CD4-positive, alpha-beta T cell (primary cell): ENCODE measurements at regions of chr19 and their contacts with region 1.

Region 1: GRCh38 chr19:36687214-36688056 is at the start of gene ZNF567:
- DNase-seq: peak; percentile 94 to 99 (median 97)
- ATAC-seq: peak; percentile 93
- H3K4me3 ChIP-seq: peak within 1 kb of the TSS; percentile 67
- H3K4me3 Mint-ChIP-seq: peak within 1 kb of the TSS; percentile 99
- H3K27ac ChIP-seq: peak within 1 kb of the TSS; percentile 47 to 56
- H3K27ac Mint-ChIP-seq: peak within 1 kb of the TSS; percentile 97
- H3K4me1 ChIP-seq: peaks cover 23% of the 10 kb centered on the region
- H3K4me1 Mint-ChIP-seq: peaks cover 40% of the 10 kb centered on the region
- H3K27me3 ChIP-seq: no peaks in the 10 kb centered on the region
- H3K27me3 Mint-ChIP-seq: no peaks in the 10 kb centered on the region
- CTCF ChIP-seq: no peak
- total RNA-seq, gene ZNF567: 7.3 to 7.6 TPM

Region 2: GRCh38 chr19:36489118-36489919 is 198.1 kb before region 1 on chr19 and contains the start of gene ZNF566:
- CTCF ChIA-PET with region 1: no interaction called
- POLR2A ChIA-PET with region 1: no interaction called
- intact Hi-C with region 1: loop called (anchors 1 to 5 kb)
- DNase-seq: peak; percentile 84 to 97 (median 89)
- ATAC-seq: peak; percentile 90
- H3K4me3 ChIP-seq: peak within 1 kb of the TSS; percentile 64
- H3K4me3 Mint-ChIP-seq: peak within 1 kb of the TSS; percentile 97
- H3K27ac ChIP-seq: peak within 1 kb of the TSS; percentile 84 to 87
- H3K27ac Mint-ChIP-seq: peak within 1 kb of the TSS; percentile 99
- H3K4me1 ChIP-seq: peaks cover 19% of the 10 kb centered on the region
- H3K4me1 Mint-ChIP-seq: peaks cover 36% of the 10 kb centered on the region
- H3K27me3 ChIP-seq: no peaks in the 10 kb centered on the region
- H3K27me3 Mint-ChIP-seq: no peaks in the 10 kb centered on the region
- CTCF ChIP-seq: no peak
- total RNA-seq, gene ZNF566: 6.3 to 6.8 TPM

Region 3: GRCh38 chr19:36605101-36605876 is 82.1 kb before region 1 on chr19 and contains the start of gene ZNF382:
- CTCF ChIA-PET with region 1: no interaction called
- POLR2A ChIA-PET with region 1: interaction called, 20 read pairs
- intact Hi-C with region 1: loop called in 1 of 2 experiments (anchors 1 kb)
- DNase-seq: peak; percentile 74 to 92 (median 85)
- ATAC-seq: peak; percentile 75
- H3K4me3 ChIP-seq: peak within 1 kb of the TSS; percentile 87
- H3K4me3 Mint-ChIP-seq: peak within 1 kb of the TSS; percentile 85
- H3K27ac ChIP-seq: peak within 1 kb of the TSS; percentile 92 to 95
- H3K27ac Mint-ChIP-seq: peak within 1 kb of the TSS; percentile 83
- H3K4me1 ChIP-seq: peaks cover 10% of the 10 kb centered on the region
- H3K4me1 Mint-ChIP-seq: peaks cover 28% of the 10 kb centered on the region
- H3K27me3 ChIP-seq: no peaks in the 10 kb centered on the region
- H3K27me3 Mint-ChIP-seq: no peaks in the 10 kb centered on the region
- CTCF ChIP-seq: no peak
- total RNA-seq, gene ZNF382: 4.2 to 4.4 TPM

Region 4: DNA sequence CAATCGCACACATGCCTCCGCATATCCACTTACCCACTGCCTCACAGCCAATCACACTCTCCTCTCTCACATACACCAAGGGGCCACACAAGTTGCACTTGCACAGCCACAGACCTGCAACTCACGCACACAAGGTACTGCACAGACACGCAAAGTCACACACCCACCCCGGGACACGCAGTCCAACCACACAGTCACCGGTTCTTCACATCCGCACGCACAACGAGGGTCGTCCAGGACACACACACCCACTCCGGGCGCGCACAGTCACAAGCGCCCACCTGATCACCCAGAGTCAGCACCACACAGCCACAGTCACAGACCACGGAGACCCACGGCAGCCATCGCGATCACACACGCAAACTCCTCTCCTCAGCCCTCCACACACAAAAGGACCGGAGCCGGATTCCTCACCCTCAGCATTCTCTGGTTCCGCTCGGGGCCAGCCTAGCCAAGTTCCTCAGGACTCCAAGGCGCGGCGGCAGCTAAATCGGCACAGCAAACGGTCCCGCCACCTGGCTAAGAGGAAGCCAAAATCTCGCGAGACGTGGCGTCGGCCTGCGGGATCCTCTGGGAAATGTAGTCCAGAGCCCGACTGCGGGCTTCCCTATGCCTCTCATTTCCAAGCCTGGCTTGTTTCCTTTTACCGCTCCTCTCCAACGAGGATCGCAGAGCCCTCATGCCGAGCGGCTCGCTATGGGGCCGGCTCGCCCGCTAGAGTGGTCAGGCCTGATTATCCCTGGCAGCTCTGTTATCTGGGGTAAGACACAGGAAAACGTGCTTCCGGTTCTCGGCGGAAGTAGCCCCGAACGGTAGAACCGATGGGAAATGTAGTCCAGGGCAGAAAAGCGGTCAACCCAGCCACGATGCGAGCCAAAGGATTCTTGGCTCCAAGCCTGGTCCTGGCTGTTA is 85.1 kb after region 1 on chr19 and contains the start of gene ZNF850:
- CTCF ChIA-PET with region 1: no interaction called
- POLR2A ChIA-PET with region 1: no interaction called
- intact Hi-C with region 1: loop called in 1 of 2 experiments (anchors 2 kb)
- DNase-seq: peak; percentile 87 to 96 (median 93)
- ATAC-seq: peak; percentile 94
- H3K4me3 ChIP-seq: peak within 1 kb of the TSS; percentile 91
- H3K4me3 Mint-ChIP-seq: peak within 1 kb of the TSS; percentile 95
- H3K27ac ChIP-seq: peak within 1 kb of the TSS; percentile 78 to 94
- H3K27ac Mint-ChIP-seq: peak within 1 kb of the TSS; percentile 84
- H3K4me1 ChIP-seq: peaks cover 20% of the 10 kb centered on the region
- H3K4me1 Mint-ChIP-seq: peaks cover 20% of the 10 kb centered on the region
- H3K27me3 ChIP-seq: no peaks in the 10 kb centered on the region
- H3K27me3 Mint-ChIP-seq: no peaks in the 10 kb centered on the region
- CTCF ChIP-seq: no peak
- total RNA-seq, gene ZNF850: 0.77 to 2.1 TPM

Region 5: GRCh38 chr19:37334179-37335071 is 647.0 kb after region 1 on chr19:
- CTCF ChIA-PET with region 1: no interaction called
- POLR2A ChIA-PET with region 1: no interaction called
- intact Hi-C with region 1: loop called in 1 of 2 experiments (anchors 10 kb)
- DNase-seq: peak; percentile 76 to 96 (median 85)
- ATAC-seq: peak; percentile 99
- H3K4me3 ChIP-seq: peak overlapping the region; percentile 66
- H3K4me3 Mint-ChIP-seq: peak overlapping the region; percentile 92
- H3K27ac ChIP-seq: peak overlapping the region; percentile 54 to 69
- H3K27ac Mint-ChIP-seq: peak overlapping the region; percentile 95
- H3K4me1 ChIP-seq: peaks cover 20% of the 10 kb centered on the region
- H3K4me1 Mint-ChIP-seq: peaks cover 40% of the 10 kb centered on the region
- H3K27me3 ChIP-seq: no peaks in the 10 kb centered on the region
- H3K27me3 Mint-ChIP-seq: no peaks in the 10 kb centered on the region
- CTCF ChIP-seq: no peak

Region 6: DNA sequence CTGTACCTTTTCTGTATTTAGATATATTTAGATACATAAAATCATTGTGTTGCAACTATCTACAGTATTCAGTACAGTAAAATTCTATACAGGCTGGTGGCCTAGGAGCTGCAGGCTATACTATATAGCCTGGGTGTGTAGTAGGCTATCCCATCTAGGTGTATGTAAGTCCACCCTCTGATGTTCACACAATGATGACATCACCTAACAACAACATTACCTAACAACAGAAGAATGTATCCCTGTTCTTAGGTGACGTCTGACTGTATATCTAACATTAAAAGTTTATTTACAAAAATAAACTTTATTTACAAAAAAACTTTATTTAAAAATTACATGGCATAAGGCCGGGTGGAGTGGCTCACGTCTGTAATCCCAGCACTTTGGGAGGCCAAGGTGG is 996.1 kb after region 1 on chr19:
- CTCF ChIA-PET with region 1: no interaction called
- POLR2A ChIA-PET with region 1: no interaction called
- intact Hi-C with region 1: no loop called
- DNase-seq: no peak
- ATAC-seq: no peak
- H3K4me3 ChIP-seq: no peak overlapping the region
- H3K4me3 Mint-ChIP-seq: no peak overlapping the region
- H3K27ac ChIP-seq: no peak overlapping the region
- H3K27ac Mint-ChIP-seq: no peak overlapping the region
- H3K4me1 ChIP-seq: no peaks in the 10 kb centered on the region
- H3K4me1 Mint-ChIP-seq: no peaks in the 10 kb centered on the region
- H3K27me3 ChIP-seq: no peaks in the 10 kb centered on the region
- H3K27me3 Mint-ChIP-seq: no peaks in the 10 kb centered on the region
- CTCF ChIP-seq: no peak